CD8-positive, alpha-beta T cell (primary cell): ENCODE measurements at regions of chr7 and their contacts with region 1.

Region 1: DNA sequence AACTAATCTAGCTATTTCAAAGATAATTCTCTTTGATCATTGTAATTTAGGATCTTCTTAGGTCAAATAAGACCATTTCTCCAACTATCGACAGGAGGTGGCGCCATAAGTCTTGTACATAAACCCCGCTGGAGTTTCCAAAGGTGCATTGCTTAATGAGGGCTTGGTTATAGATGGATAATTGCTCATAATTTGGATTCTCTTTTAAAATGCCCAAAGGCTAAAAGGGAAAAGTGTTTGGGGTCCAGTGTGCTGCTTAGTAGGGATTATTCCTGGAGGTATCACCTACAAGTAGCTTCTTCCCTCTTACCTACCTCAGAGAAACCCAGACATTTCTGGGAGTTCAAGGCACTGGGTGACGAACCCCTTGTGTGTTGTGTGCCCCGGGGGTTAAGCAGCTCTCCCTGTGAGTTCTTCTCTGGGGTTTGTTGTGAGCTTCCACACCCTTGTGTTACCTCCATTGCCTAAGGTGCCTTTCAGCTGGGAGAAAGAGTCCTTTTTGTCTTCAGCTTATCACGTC is 75.2 kb downstream of the PAXIP1 start:
- DNase-seq: peak; percentile 53 to 90 (median 80)
- ATAC-seq: peak; percentile 57
- H3K4me3 ChIP-seq: peak overlapping the region; percentile 74 to 78
- H3K4me3 Mint-ChIP-seq: peak overlapping the region; percentile 95
- H3K27ac ChIP-seq: peak overlapping the region; percentile 84 to 92
- H3K27ac Mint-ChIP-seq: peak overlapping the region; percentile 99
- H3K4me1 ChIP-seq: peaks cover 15% of the 10 kb centered on the region
- H3K4me1 Mint-ChIP-seq: peaks cover 35% of the 10 kb centered on the region
- H3K27me3 ChIP-seq: no peaks in the 10 kb centered on the region
- H3K27me3 Mint-ChIP-seq: no peaks in the 10 kb centered on the region
- CTCF ChIP-seq: peak; percentile 79

Region 2: GRCh38 chr7:154953006-154953684 is 25.5 kb after region 1 on chr7:
- CTCF ChIA-PET with region 1: interaction called, 48 read pairs
- POLR2A ChIA-PET with region 1: interaction called, 4 read pairs
- intact Hi-C with region 1: loop called (anchors 1 kb)
- DNase-seq: peak; percentile 43 to 77 (median 75)
- ATAC-seq: peak; percentile 73
- H3K4me3 ChIP-seq: no peak overlapping the region
- H3K4me3 Mint-ChIP-seq: no peak overlapping the region
- H3K27ac ChIP-seq: no peak overlapping the region
- H3K27ac Mint-ChIP-seq: no peak overlapping the region
- H3K4me1 ChIP-seq: no peaks in the 10 kb centered on the region
- H3K4me1 Mint-ChIP-seq: no peaks in the 10 kb centered on the region
- H3K27me3 ChIP-seq: no peaks in the 10 kb centered on the region
- H3K27me3 Mint-ChIP-seq: no peaks in the 10 kb centered on the region
- CTCF ChIP-seq: peak; percentile 65

Region 3: GRCh38 chr7:155190688-155191087 is 263.0 kb after region 1 on chr7:
- CTCF ChIA-PET with region 1: interaction called, 19 read pairs
- POLR2A ChIA-PET with region 1: no interaction called
- intact Hi-C with region 1: loop called (anchors 2 to 5 kb)
- DNase-seq: peak in 8 of 9 experiments; percentile 38 to 79 (median 62)
- ATAC-seq: peak; percentile 90
- H3K4me3 ChIP-seq: no peak overlapping the region
- H3K4me3 Mint-ChIP-seq: peak overlapping the region; percentile 22
- H3K27ac ChIP-seq: no peak overlapping the region
- H3K27ac Mint-ChIP-seq: no peak overlapping the region
- H3K4me1 ChIP-seq: peaks cover 2% of the 10 kb centered on the region
- H3K4me1 Mint-ChIP-seq: peaks cover 3% of the 10 kb centered on the region
- H3K27me3 ChIP-seq: peaks cover 0 to 2% of the 10 kb centered on the region in 2 experiments
- H3K27me3 Mint-ChIP-seq: peaks cover 14% of the 10 kb centered on the region
- CTCF ChIP-seq: peak; percentile 91

Region 4: DNA sequence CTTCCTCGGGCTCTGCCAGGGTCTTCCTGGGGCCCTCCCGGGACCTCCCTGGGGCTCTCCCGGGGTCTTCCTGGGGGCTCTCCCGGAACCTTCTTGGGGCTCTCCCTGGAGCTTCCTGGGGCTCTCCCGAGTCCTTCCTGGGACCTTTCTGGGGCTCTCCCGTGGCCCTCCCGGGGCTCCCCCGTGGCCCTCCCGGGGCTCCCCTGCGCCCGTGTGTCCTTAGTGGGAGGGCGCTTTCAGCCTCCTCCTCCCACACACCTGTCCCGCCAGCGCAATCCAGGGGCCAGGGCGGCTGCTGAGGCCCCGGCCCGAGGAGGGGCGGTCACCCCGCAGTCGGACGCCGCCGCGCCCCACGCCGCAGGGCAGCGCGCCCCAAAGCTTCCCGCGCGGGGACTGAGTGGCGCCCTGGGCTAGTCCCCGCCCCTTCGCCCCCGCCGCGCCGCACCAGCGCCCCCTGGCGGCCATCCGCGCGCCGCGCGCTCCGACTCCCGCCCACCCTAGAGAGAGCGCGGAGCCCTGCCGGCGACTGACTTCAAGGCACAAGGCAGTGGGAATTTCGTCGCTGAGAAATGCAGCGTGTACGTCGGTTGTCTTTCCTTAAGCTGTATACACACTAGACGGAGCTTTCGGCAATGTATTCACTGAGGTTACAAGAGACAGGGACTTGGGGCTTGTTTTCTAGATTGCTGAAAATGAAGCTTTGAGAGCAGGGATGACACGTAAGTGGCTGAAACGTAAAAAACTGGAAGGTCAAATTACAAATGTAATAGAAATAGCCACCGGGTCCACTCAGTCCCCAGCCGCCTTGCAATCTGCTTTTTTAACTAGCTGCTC is 417.1 kb after region 1 on chr7:
- CTCF ChIA-PET with region 1: interaction called, 47 read pairs
- POLR2A ChIA-PET with region 1: interaction called, 6 read pairs
- intact Hi-C with region 1: loop called (anchors 1 kb)
- DNase-seq: peak; percentile 76 to 95 (median 83)
- ATAC-seq: peak; percentile 97
- H3K4me3 ChIP-seq: peak overlapping the region; percentile 28 to 33
- H3K4me3 Mint-ChIP-seq: peak overlapping the region; percentile 66
- H3K27ac ChIP-seq: no peak overlapping the region
- H3K27ac Mint-ChIP-seq: no peak overlapping the region
- H3K4me1 ChIP-seq: peaks cover 9% of the 10 kb centered on the region
- H3K4me1 Mint-ChIP-seq: peaks cover 4% of the 10 kb centered on the region
- H3K27me3 ChIP-seq: peaks cover 0 to 4% of the 10 kb centered on the region in 2 experiments
- H3K27me3 Mint-ChIP-seq: no peaks in the 10 kb centered on the region
- CTCF ChIP-seq: peak; percentile 71

Region 5: DNA sequence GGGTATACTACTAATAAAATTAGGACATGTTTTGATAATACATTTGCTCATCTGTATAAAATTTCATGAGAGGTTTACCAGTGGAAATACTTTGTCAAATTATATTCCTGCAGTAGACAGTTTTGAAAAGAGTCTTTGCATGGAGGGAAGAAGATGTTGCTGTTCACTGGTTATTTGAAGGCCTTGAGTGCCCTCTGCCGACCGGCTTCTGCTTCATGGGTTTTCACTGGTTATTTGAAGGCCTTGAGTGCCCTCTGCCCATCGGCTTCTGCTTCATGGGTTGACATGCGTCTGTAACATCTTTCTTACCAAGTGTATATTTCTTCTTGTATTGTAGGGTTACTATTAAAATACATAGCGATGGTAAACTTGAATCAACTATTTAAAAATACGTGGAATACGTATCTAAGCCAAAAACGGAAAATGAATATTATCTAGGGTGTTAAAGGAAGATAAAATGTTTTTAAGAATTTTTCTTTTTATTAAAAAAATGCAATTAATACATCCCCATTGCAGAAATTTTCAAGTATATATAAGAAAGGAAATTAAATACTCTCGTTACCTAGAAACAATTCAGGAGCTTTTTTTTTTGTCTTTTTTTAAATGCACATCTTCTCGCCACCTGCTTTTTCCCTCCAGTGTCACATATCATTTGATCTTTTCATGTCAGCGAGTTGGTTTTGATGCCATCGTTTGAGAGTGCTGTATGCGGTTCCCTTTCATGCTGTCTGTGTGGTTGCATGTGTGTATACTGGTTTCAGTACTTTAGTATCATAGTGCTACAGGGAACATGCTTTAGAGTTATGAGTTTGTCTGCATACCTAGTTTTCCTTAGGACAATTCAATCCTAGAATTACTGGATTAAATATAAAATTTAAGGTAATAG is 811.2 kb after region 1 on chr7:
- CTCF ChIA-PET with region 1: interaction called, 3 read pairs
- POLR2A ChIA-PET with region 1: no interaction called
- intact Hi-C with region 1: loop called in 1 of 2 experiments (anchors 5 kb)
- DNase-seq: peak; percentile 41 to 81 (median 67)
- ATAC-seq: peak; percentile 86
- H3K4me3 ChIP-seq: no peak overlapping the region
- H3K4me3 Mint-ChIP-seq: peak overlapping the region; percentile 1
- H3K27ac ChIP-seq: peak overlapping the region in 1 of 2 experiments; percentile 29
- H3K27ac Mint-ChIP-seq: peak overlapping the region; percentile 55
- H3K4me1 ChIP-seq: peaks cover 30% of the 10 kb centered on the region
- H3K4me1 Mint-ChIP-seq: peaks cover 43% of the 10 kb centered on the region
- H3K27me3 ChIP-seq: no peaks in the 10 kb centered on the region
- H3K27me3 Mint-ChIP-seq: no peaks in the 10 kb centered on the region
- CTCF ChIP-seq: peak; percentile 64

Region 6: DNA sequence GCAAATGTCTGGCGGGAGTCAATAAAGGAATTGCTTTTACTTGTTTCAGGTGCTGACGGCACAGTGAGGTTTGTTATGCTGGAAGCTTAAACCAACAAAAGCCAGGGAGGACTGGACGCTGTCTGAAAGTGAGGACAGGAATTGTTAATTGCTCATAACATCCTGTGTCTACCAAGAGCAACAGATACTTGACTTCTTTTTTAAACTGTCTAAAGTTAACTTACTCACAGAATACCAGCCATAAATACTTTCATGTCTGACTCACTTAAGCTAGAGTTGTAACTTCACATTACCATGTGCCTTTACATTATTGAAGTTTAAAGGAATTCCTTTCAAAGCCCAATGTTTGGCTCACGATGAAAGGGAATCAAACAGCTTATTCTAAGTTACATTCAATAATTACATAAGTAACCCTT is 1137.3 kb after region 1 on chr7:
- CTCF ChIA-PET with region 1: no interaction called
- POLR2A ChIA-PET with region 1: no interaction called
- intact Hi-C with region 1: no loop called
- DNase-seq: no peak
- ATAC-seq: no peak
- H3K4me3 ChIP-seq: no peak overlapping the region
- H3K4me3 Mint-ChIP-seq: no peak overlapping the region
- H3K27ac ChIP-seq: no peak overlapping the region
- H3K27ac Mint-ChIP-seq: no peak overlapping the region
- H3K4me1 ChIP-seq: no peaks in the 10 kb centered on the region
- H3K4me1 Mint-ChIP-seq: no peaks in the 10 kb centered on the region
- H3K27me3 ChIP-seq: no peaks in the 10 kb centered on the region
- H3K27me3 Mint-ChIP-seq: no peaks in the 10 kb centered on the region
- CTCF ChIP-seq: no peak